Right ventricle myocardium inferior (tissue), 1 donor: ENCODE measurements at regions of chr1 and their contacts with region 1.

Region 1: DNA sequence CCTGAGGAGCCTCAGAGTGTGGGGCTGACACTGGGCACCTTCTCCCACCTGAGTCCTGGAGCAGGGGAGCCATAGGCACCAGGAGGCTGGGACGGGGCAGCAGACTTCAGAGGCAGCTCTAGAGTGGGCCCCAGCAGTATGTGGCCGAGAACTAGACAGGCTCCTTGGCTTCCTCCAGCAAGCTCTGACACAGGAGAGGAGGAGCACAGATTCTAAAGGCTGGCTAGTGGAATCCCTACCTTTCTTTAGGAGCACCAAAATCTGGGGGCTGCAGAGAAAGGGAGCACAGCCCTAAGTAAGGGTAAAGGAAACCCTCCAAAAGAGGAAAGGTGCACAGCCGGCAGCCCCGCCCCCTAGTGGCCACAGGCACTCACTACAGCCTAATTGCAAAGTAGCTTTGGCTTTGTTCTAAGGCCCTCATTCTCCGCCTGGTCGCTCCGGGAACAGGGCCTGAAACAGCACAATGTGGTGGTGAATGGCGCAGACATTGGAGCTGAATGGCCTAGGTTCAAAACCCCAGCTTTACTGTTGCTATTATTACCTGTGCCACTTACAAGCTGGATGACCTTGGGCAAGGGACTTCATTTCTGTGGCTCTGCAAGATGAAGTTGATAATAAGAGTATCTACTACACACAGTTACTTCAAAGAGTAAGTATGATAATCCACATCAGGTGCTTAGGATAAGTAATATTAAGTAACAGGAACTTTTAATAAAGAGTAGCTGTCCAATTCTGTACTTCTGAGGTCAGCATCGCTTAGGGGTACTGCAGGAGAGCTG is 8.8 kb upstream of the GUCA2A start:
- DNase-seq: peak; percentile 92
- ATAC-seq: peak; percentile 40

Region 2: DNA sequence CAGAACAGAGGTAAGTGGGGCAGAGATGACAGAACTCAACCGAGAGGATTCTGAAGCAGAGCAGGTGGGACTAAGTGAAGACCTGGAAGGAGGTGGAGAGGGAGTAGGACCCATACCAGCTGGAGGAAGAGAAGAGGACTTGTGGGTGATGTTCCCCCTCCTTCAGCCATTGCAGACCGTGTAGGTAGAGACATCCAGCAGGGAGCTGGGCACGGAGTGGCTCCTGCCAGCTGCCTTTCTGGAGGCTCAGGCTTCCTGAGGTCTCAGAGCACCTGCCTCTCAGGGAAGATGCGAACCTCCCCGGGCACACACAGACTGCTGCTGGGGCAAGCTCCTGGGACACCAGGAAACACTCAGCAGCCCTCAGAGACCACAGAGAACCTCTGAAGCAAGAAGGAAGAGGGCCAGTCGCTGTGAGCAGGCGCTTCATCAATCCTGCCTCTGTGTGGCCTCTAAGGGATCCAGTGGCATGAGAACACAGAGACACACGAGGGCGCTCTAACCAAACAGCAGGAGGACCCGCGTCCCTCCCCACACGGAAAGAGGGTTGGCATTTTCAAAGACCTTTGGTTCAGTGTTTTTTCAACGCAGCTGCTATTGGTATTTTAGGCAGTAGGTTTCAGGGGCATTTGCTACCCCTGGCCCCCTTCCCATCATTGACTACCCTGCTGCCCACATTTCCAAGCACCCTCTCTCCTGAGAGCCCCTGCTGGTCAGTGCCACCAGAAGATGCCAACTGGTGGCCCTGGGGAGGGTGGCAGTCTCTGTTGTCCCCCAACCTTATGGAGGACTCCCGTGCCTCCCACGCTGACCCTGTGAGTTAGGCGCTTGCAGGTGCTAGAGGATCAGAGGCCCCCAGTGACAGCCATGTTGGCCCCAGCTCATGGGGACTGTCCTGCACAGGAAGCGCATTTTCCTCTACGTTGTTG is 599.3 kb before region 1 on chr1:
- intact Hi-C with region 1: loop called (anchors 1 kb)
- DNase-seq: peak; percentile 83
- ATAC-seq: peak; percentile 87

Region 3: GRCh38 chr1:41812051-41812450 is 361.3 kb before region 1 on chr1:
- intact Hi-C with region 1: loop called (anchors 10 kb)
- DNase-seq: no peak
- ATAC-seq: no peak

Region 4: GRCh38 chr1:42070996-42071395 is 102.3 kb before region 1 on chr1:
- intact Hi-C with region 1: no loop called
- DNase-seq: no peak
- ATAC-seq: no peak

Region 5: GRCh38 chr1:42146626-42147320 is 26.6 kb before region 1 on chr1:
- intact Hi-C with region 1: loop called (anchors 1 kb)
- DNase-seq: no peak
- ATAC-seq: peak; percentile 56

Region 6: GRCh38 chr1:42335050-42335808 is 161.9 kb after region 1 on chr1 and contains the start of gene FOXJ3:
- intact Hi-C with region 1: loop called (anchors 5 kb)
- DNase-seq: peak; percentile 95
- ATAC-seq: peak; percentile 94
- total RNA-seq, gene FOXJ3: 37.9 TPM

Region 7: GRCh38 chr1:42456010-42456758 is 282.8 kb after region 1 on chr1 and contains the starts of genes PPCS and ZMYND12:
- intact Hi-C with region 1: loop called (anchors 10 kb)
- DNase-seq: peak; percentile 95
- ATAC-seq: peak; percentile 97
- total RNA-seq, gene PPCS: 36.8 TPM
- total RNA-seq, gene ZMYND12: 1.4 TPM

Region 8: GRCh38 chr1:42679364-42679983 is 506.1 kb after region 1 on chr1:
- intact Hi-C with region 1: loop called (anchors 10 kb)
- DNase-seq: peak; percentile 31
- ATAC-seq: no peak